ENCODE measurements at regions of chr7 and their contacts with region 1.

Region 1: DNA sequence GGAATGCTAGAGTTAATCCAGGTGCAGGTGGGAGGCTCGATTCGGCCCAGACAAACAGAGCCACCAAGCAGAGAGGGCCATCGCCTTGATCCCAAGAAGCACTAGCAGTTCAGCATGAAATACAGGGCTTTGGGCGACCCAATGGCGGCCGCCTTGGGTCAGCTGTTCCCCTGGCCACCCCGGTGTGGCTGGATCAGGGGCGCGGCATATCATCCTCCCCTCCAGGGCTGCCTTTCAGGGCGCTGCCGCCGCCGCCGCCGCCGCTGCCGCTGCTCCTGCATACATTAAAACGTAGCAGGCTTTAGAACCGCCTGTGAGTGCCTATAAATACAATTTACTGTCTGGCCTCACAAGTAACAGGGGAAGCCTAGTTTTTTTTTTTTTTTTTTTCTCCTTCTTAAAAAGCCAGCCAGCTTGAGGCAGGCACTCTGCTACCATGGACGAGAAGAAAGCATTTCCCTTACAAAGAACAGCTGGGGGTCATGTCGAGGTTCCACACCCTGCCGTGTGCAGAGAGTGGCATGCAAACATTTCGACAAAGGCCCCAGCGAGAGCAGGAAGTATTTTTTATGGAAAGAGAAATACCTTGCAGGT is 57.7 kb upstream of the EFCAB10 start:
- DNase-seq: peak; percentile 80 to 81
- H3K4me3 ChIP-seq: peak overlapping the region; percentile 25 to 67 (median 59); a peak in 7 of 8 replicates
- H3K27ac ChIP-seq: peak overlapping the region; percentile 94
- H3K4me1 ChIP-seq: peaks cover 31 to 65% (median 39%) of the 10 kb centered on the region in 4 experiments
- H3K27me3 ChIP-seq: no peaks in the 10 kb centered on the region
- CTCF ChIP-seq: no peak
- EP300 ChIP-seq: peak in 1 of 2 experiments; percentile 74; a peak in 1 of 3 replicates
- POLR2A ChIP-seq: peak; percentile 17 to 43
- RAD21 ChIP-seq: no peak

Region 2: DNA sequence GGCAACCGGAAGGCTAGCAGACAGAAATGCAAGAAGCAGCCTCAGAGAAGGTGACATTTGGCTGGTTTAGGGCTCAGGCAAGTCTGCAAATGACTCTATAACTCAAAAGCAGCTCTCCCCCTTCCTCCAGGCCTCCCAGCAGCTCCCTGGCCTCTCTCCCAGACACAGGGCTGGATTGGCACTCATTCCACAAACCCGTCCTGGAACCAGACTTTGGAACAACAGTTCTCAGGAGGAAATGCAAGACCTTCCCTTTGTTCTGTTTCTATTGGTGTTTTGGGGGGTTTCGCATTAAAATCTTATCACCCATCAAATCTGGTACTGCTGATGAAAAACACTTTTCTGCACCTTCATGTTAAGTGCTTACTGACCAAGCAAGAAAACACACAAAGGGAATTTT is 17.4 kb before region 1 on chr7:
- CTCF ChIA-PET with region 1: interaction called, 4 read pairs
- POLR2A ChIA-PET with region 1: interaction called, 57 read pairs
- DNase-seq: no peak
- H3K4me3 ChIP-seq: no peak overlapping the region
- H3K27ac ChIP-seq: no peak overlapping the region
- H3K4me1 ChIP-seq: no peaks in the 10 kb centered on the region
- H3K27me3 ChIP-seq: no peaks in the 10 kb centered on the region
- CTCF ChIP-seq: no peak
- EP300 ChIP-seq: no peak
- POLR2A ChIP-seq: no peak
- RAD21 ChIP-seq: no peak